ENCODE measurements at regions of chr19 and their contacts with region 1.

Region 1: GRCh38 chr19:23116802-23117571 is at the start of gene ZNF730:
- DNase-seq: peak; percentile 66 to 91
- H3K4me3 ChIP-seq: peak within 1 kb of the TSS; percentile 50 to 81 (median 68)
- H3K27ac ChIP-seq: peak within 1 kb of the TSS; percentile 98
- H3K4me1 ChIP-seq: no peaks in the 10 kb centered on the region
- H3K27me3 ChIP-seq: no peaks in the 10 kb centered on the region
- CTCF ChIP-seq: no peak
- EP300 ChIP-seq: 0 out of 3 replicates have a peak, but pooled peaks of 1 of the 2 experiments have one; percentile 4
- POLR2A ChIP-seq: peak; percentile 56 to 96
- RAD21 ChIP-seq: no peak
- total RNA-seq, gene ZNF730: 24.7 and 29.4 TPM in 2 replicates

Region 2: GRCh38 chr19:23059731-23060445 is 57.1 kb before region 1 on chr19:
- CTCF ChIA-PET with region 1: no interaction called
- POLR2A ChIA-PET with region 1: no interaction called
- DNase-seq: no peak
- H3K4me3 ChIP-seq: no peak overlapping the region
- H3K27ac ChIP-seq: no peak overlapping the region
- H3K4me1 ChIP-seq: no peaks in the 10 kb centered on the region
- H3K27me3 ChIP-seq: no peaks in the 10 kb centered on the region
- CTCF ChIP-seq: no peak
- EP300 ChIP-seq: no peak
- POLR2A ChIP-seq: no peak
- RAD21 ChIP-seq: no peak

Region 3: GRCh38 chr19:23222998-23223652 is 106.1 kb after region 1 on chr19:
- CTCF ChIA-PET with region 1: no interaction called
- POLR2A ChIA-PET with region 1: no interaction called
- DNase-seq: no peak
- H3K4me3 ChIP-seq: peak overlapping the region in 1 of 4 experiments; percentile 10; a peak in 1 of 8 replicates
- H3K27ac ChIP-seq: no peak overlapping the region
- H3K4me1 ChIP-seq: no peaks in the 10 kb centered on the region
- H3K27me3 ChIP-seq: no peaks in the 10 kb centered on the region
- CTCF ChIP-seq: no peak
- EP300 ChIP-seq: no peak
- POLR2A ChIP-seq: no peak
- RAD21 ChIP-seq: no peak

Region 4: GRCh38 chr19:23249911-23250649 is 133.1 kb after region 1 on chr19 and contains the start of gene ZNF724:
- CTCF ChIA-PET with region 1: no interaction called
- POLR2A ChIA-PET with region 1: interaction called, 18 read pairs
- DNase-seq: peak; percentile 89 to 94
- H3K4me3 ChIP-seq: peak within 1 kb of the TSS; percentile 62 to 98 (median 92)
- H3K27ac ChIP-seq: peak within 1 kb of the TSS; percentile 97
- H3K4me1 ChIP-seq: peaks cover 0 to 3% (median 0%) of the 10 kb centered on the region in 4 experiments; a peak in 2 of 7 replicates
- H3K27me3 ChIP-seq: no peaks in the 10 kb centered on the region
- CTCF ChIP-seq: no peak
- EP300 ChIP-seq: no peak
- POLR2A ChIP-seq: peak; percentile 79 to 99
- RAD21 ChIP-seq: no peak; a peak in 1 of 4 replicates
- total RNA-seq, gene ZNF724: 62.3 and 67.2 TPM in 2 replicates

Measured in H1 (cell line).